B cell (primary cell): ENCODE measurements at regions of chr13 and their contacts with region 1.

Region 1: GRCh38 chr13:52652196-52652979 is at the start of gene SUGT1:
- DNase-seq: peak; percentile 97
- ATAC-seq: peak; percentile 93
- H3K4me3 ChIP-seq: peak within 1 kb of the TSS; percentile 63 to 97 (median 95)
- H3K4me3 Mint-ChIP-seq: no peak within 1 kb of the TSS
- H3K27ac ChIP-seq: peak within 1 kb of the TSS; percentile 93 to 98
- H3K27ac Mint-ChIP-seq: no peak within 1 kb of the TSS
- H3K4me1 ChIP-seq: peaks cover 8 to 25% of the 10 kb centered on the region in 2 donors
- H3K4me1 Mint-ChIP-seq: peaks cover 11% of the 10 kb centered on the region
- H3K27me3 ChIP-seq: no peaks in the 10 kb centered on the region
- H3K27me3 Mint-ChIP-seq: no peaks in the 10 kb centered on the region
- CTCF ChIP-seq: peak; percentile 75
- total RNA-seq, gene SUGT1: 38.2 and 38.4 TPM in 2 replicates

Region 2: GRCh38 chr13:52617070-52618060 is 35.0 kb before region 1 on chr13:
- CTCF ChIA-PET with region 1: interaction called, 43 read pairs
- POLR2A ChIA-PET with region 1: interaction called, 44 read pairs
- intact Hi-C with region 1: loop called (anchors 1 kb)
- DNase-seq: peak; percentile 88
- ATAC-seq: peak; percentile 95
- H3K4me3 ChIP-seq: peak overlapping the region; percentile 65 to 96 (median 93)
- H3K4me3 Mint-ChIP-seq: peak overlapping the region; percentile 98
- H3K27ac ChIP-seq: peak overlapping the region; percentile 54 to 77
- H3K27ac Mint-ChIP-seq: peak overlapping the region; percentile 97
- H3K4me1 ChIP-seq: peaks cover 12 to 16% of the 10 kb centered on the region in 2 donors
- H3K4me1 Mint-ChIP-seq: peaks cover 41% of the 10 kb centered on the region
- H3K27me3 ChIP-seq: no peaks in the 10 kb centered on the region
- H3K27me3 Mint-ChIP-seq: peaks cover under 1% of the 10 kb centered on the region
- CTCF ChIP-seq: no peak

Region 3: GRCh38 chr13:52665325-52665724 is 12.9 kb after region 1 on chr13:
- CTCF ChIA-PET with region 1: interaction called, 11 read pairs
- POLR2A ChIA-PET with region 1: no interaction called
- intact Hi-C with region 1: no loop called
- DNase-seq: peak; percentile 12
- ATAC-seq: peak; percentile 39
- H3K4me3 ChIP-seq: no peak overlapping the region
- H3K4me3 Mint-ChIP-seq: no peak overlapping the region
- H3K27ac ChIP-seq: no peak overlapping the region
- H3K27ac Mint-ChIP-seq: no peak overlapping the region
- H3K4me1 ChIP-seq: no peaks in the 10 kb centered on the region
- H3K4me1 Mint-ChIP-seq: no peaks in the 10 kb centered on the region
- H3K27me3 ChIP-seq: no peaks in the 10 kb centered on the region
- H3K27me3 Mint-ChIP-seq: no peaks in the 10 kb centered on the region
- CTCF ChIP-seq: peak; percentile 67